ENCODE measurements at regions of chr5 and their contacts with region 1.

Region 1: GRCh38 chr5:138274189-138274853 is at the start of gene GFRA3:
- DNase-seq: no peak
- ATAC-seq: peak; percentile 69
- H3K4me3 ChIP-seq: peak within 1 kb of the TSS; percentile 30; the same call in 1 of the 2 replicates
- H3K27ac ChIP-seq: no peak within 1 kb of the TSS
- H3K4me1 ChIP-seq: no peaks in the 10 kb centered on the region; the same call in 1 of the 2 replicates
- H3K27me3 ChIP-seq: peaks cover 32% of the 10 kb centered on the region
- CTCF ChIP-seq: no peak
- POLR2A ChIP-seq: no peak
- RAD21 ChIP-seq: no peak
- total RNA-seq, gene GFRA3: not detected in 2 replicates

Region 2: DNA sequence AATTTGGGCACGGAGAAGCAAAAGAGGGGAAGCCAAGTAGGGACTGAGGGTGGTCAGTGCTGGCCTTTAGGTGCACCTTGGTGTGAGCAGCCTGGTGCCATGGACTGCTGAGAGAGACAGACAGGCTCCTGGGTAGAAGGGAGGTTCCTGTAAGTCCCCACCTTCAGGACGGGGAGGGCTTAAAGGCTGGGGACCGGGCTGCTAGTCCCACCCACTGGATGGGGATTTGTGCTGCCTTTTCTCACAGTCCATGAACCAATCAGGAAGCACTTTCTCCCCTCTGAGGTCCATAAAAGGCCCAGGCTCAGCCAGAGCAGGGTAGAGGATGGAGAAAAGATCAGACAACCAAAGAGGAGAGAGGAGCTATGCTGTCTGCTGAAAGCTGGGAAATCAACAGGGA is 42.0 kb after region 1 on chr5:
- CTCF ChIA-PET with region 1: no interaction called
- POLR2A ChIA-PET with region 1: no interaction called
- dilution Hi-C with region 1: no loop called
- in situ Hi-C with region 1: no loop called
- intact Hi-C with region 1: no loop called
- DNase-seq: no peak
- ATAC-seq: no peak
- H3K4me3 ChIP-seq: no peak overlapping the region
- H3K27ac ChIP-seq: no peak overlapping the region
- H3K4me1 ChIP-seq: no peaks in the 10 kb centered on the region
- H3K27me3 ChIP-seq: no peaks in the 10 kb centered on the region
- CTCF ChIP-seq: no peak
- POLR2A ChIP-seq: no peak
- RAD21 ChIP-seq: no peak

Region 3: GRCh38 chr5:138966236-138966985 is 692.1 kb after region 1 on chr5:
- CTCF ChIA-PET with region 1: no interaction called
- POLR2A ChIA-PET with region 1: interaction called, 17 read pairs
- dilution Hi-C with region 1: no loop called
- in situ Hi-C with region 1: no loop called
- intact Hi-C with region 1: no loop called
- DNase-seq: no peak
- ATAC-seq: no peak
- H3K4me3 ChIP-seq: no peak overlapping the region
- H3K27ac ChIP-seq: no peak overlapping the region
- H3K4me1 ChIP-seq: peaks cover 20% of the 10 kb centered on the region
- H3K27me3 ChIP-seq: no peaks in the 10 kb centered on the region
- CTCF ChIP-seq: no peak
- POLR2A ChIP-seq: no peak
- RAD21 ChIP-seq: no peak